PC-3 (cell line): ENCODE measurements at regions of chr12 and their contacts with region 1.

Region 1: DNA sequence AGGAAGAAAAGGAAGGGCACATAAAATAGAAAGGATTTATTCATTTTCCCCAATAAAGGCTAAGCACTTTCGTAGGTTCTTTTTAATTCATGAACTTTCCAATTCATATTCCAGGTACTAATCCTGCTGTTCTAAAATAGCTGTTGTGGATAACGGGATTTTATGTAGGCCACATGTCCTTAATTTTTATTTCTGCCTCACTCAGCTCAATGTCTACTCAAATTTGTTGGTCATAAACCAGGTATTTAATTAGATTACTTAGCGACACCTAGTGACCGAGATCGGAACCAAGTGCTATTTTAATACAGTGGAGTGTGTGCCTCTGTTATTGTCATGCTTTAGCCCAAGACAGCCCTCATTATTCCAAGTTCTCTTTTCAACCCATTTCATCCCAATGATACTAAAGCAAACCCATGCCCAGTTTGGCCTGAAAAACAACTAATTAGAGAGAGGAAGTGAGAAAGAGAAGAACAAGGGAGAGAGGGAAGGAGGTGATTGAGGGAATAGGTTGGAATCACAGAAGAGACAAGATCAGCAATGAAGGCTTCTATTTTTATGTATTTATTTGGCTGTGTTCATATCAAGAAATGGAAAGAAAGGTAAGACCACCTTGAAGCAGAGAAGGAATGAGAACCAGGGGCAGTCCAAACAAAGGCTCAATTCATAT is 45.9 kb upstream of the IFNG-AS1 start:
- DNase-seq: peak; percentile 90
- ATAC-seq: peak; percentile 68
- H3K4me3 ChIP-seq: no peak overlapping the region
- H3K27ac ChIP-seq: no peak overlapping the region
- H3K4me1 ChIP-seq: peaks cover 29% of the 10 kb centered on the region
- H3K27me3 ChIP-seq: no peaks in the 10 kb centered on the region
- CTCF ChIP-seq: peak; percentile 85

Region 2: DNA sequence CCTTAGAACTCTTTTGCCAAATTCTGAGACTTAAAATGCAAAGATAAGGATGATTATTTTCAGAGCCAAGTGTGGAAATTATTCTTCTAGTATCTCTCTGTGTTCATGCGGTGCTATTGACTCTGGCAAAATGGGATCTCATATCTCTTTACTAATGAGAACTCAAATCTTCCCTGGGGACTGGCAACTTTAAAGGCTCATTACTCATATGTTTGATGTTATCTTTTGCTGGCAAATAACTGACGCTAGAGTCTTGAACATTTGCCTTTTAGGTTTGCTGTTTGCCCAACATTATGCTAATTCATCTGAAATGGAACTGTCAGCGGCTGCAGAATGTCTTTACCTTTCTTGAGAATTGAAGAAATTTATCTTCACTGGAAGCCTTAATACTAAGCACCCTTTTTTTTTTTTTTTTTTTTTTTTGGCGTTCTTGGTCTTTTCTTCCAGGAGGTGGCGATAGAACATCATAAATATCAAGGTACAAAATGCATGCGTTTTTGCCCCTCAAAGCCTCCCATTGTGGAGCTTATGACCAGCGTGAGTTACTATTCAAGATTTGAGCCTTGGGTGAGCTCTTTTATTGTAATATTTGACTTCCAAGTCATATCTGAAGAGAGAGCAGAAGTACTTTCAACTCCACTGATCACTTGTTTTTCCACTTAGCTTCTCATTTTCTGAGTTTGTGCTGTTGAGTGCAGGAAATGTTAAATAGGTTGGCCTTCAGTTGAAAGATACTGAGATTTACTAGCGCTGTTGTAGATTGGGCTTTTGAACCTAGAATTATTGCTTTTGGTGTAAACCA is 587.6 kb before region 1 on chr12:
- CTCF ChIA-PET with region 1: interaction called, 28 read pairs
- POLR2A ChIA-PET with region 1: no interaction called
- intact Hi-C with region 1: loop called (anchors 1 kb)
- DNase-seq: peak; percentile 70
- ATAC-seq: peak; percentile 56
- H3K4me3 ChIP-seq: no peak overlapping the region
- H3K27ac ChIP-seq: no peak overlapping the region
- H3K4me1 ChIP-seq: peaks cover 5% of the 10 kb centered on the region
- H3K27me3 ChIP-seq: no peaks in the 10 kb centered on the region
- CTCF ChIP-seq: peak; percentile 87

Region 3: DNA sequence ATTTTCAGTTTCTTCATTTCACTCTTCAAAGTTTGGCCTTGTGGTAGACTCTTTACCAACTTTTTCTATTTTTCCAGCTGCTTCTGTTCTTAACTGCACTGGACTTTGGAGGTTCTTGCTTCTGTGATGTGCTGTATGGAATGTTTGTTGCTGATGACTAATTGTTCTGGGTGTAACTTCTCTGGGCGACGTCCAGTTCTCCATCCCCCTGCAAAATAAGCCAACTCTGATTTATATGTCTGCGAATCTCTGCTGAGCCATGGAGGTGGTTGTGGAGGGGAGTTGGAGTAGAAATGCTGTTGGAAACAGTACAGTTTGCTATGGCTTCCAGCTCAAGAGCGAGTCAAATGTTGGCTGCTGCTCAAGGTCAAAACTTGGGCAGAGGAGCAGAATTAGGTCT is 408.7 kb before region 1 on chr12:
- CTCF ChIA-PET with region 1: no interaction called
- POLR2A ChIA-PET with region 1: no interaction called
- intact Hi-C with region 1: loop called (anchors 10 kb)
- DNase-seq: peak; percentile 75
- ATAC-seq: peak; percentile 89
- H3K4me3 ChIP-seq: no peak overlapping the region
- H3K27ac ChIP-seq: no peak overlapping the region
- H3K4me1 ChIP-seq: peaks cover 24% of the 10 kb centered on the region
- H3K27me3 ChIP-seq: no peaks in the 10 kb centered on the region
- CTCF ChIP-seq: no peak

Region 4: GRCh38 chr12:67720351-67720856 is 223.0 kb before region 1 on chr12:
- CTCF ChIA-PET with region 1: no interaction called
- POLR2A ChIA-PET with region 1: no interaction called
- intact Hi-C with region 1: loop called (anchors 5 kb)
- DNase-seq: peak; percentile 78
- ATAC-seq: peak; percentile 77
- H3K4me3 ChIP-seq: no peak overlapping the region
- H3K27ac ChIP-seq: no peak overlapping the region
- H3K4me1 ChIP-seq: peaks cover 30% of the 10 kb centered on the region
- H3K27me3 ChIP-seq: no peaks in the 10 kb centered on the region
- CTCF ChIP-seq: no peak

Region 5: DNA sequence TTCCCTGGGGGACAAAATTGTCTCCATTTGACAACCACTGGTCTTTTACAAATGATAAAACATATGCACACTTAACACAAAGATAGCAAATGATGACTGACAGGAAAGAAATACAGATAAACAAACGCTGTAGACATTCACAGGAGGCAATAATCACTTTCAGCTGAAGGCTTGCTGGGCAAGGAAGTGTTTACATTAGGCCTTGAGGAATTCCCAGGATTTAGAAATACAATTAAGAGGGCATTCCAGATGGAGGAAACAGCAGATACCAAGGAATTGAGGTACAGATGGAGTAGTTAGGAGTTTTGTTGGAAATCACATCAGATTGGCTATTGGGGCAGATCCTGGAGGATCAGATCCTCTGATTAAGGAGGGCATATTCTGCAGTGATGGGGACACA is 200.9 kb before region 1 on chr12:
- CTCF ChIA-PET with region 1: no interaction called
- POLR2A ChIA-PET with region 1: no interaction called
- intact Hi-C with region 1: no loop called
- DNase-seq: no peak
- ATAC-seq: no peak
- H3K4me3 ChIP-seq: no peak overlapping the region
- H3K27ac ChIP-seq: no peak overlapping the region
- H3K4me1 ChIP-seq: peaks cover 3% of the 10 kb centered on the region
- H3K27me3 ChIP-seq: no peaks in the 10 kb centered on the region
- CTCF ChIP-seq: no peak

Region 6: GRCh38 chr12:67827820-67828383 is 115.5 kb before region 1 on chr12:
- CTCF ChIA-PET with region 1: interaction called, 3 read pairs
- POLR2A ChIA-PET with region 1: no interaction called
- intact Hi-C with region 1: loop called (anchors 5 kb)
- DNase-seq: peak; percentile 95
- ATAC-seq: peak; percentile 99
- H3K4me3 ChIP-seq: peak overlapping the region; percentile 65
- H3K27ac ChIP-seq: peak overlapping the region; percentile 78
- H3K4me1 ChIP-seq: peaks cover 18% of the 10 kb centered on the region
- H3K27me3 ChIP-seq: no peaks in the 10 kb centered on the region
- CTCF ChIP-seq: no peak

Region 7: DNA sequence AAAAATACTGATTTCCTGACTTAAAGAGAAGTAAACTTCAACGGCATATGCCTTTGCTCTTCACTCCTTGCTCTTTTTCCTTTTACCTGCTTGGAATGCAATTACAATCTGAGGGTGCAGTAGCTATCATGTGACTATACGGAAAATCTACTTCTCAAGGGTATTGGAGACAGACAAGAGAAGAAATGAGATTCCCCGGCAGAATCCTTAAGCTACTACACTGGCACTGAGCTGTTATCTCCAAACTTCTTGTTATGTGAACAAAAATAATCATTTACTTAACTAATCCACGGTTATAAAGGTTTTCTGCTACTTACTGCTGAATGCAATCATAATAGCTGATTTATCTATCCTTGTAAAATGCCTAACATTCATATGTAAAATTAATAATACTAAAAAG is 72.1 kb before region 1 on chr12:
- CTCF ChIA-PET with region 1: no interaction called
- POLR2A ChIA-PET with region 1: no interaction called
- intact Hi-C with region 1: no loop called
- DNase-seq: no peak
- ATAC-seq: no peak
- H3K4me3 ChIP-seq: no peak overlapping the region
- H3K27ac ChIP-seq: no peak overlapping the region
- H3K4me1 ChIP-seq: no peaks in the 10 kb centered on the region
- H3K27me3 ChIP-seq: no peaks in the 10 kb centered on the region
- CTCF ChIP-seq: no peak